Transverse colon (tissue), 4 donors: ENCODE measurements at regions of chr4 and their contacts with region 1.

Region 1: DNA sequence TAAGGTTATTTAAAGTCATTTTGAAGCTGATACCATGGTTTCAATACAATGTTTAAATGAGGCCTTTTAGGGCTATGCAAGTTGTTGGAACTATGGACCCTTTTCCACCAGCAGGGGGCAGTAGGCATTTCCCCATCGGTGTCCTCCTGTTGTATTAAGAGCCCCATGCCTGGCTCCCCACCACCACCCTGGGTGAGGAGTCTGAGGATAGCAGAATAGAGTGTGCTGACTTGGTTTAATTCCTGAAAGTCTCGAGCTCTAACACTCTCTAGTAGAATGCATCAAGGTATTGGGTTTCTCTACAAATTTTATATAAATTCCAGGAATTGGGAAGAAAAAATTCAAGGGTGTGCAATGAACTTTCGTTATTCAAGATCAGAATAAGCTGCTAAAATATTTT is 234.8 kb upstream of the JADE1 start:
- DNase-seq: peak; percentile 84
- H3K4me3 ChIP-seq: no peak overlapping the region
- H3K27ac ChIP-seq: no peak overlapping the region
- H3K4me1 ChIP-seq: peaks cover 0 to 29% (median 10%) of the 10 kb centered on the region in 4 donors
- H3K27me3 ChIP-seq: no peaks in the 10 kb centered on the region
- CTCF ChIP-seq: peak; percentile 57 to 65 (median 64)
- EP300 ChIP-seq: no peak
- POLR2A ChIP-seq: no peak

Region 2: DNA sequence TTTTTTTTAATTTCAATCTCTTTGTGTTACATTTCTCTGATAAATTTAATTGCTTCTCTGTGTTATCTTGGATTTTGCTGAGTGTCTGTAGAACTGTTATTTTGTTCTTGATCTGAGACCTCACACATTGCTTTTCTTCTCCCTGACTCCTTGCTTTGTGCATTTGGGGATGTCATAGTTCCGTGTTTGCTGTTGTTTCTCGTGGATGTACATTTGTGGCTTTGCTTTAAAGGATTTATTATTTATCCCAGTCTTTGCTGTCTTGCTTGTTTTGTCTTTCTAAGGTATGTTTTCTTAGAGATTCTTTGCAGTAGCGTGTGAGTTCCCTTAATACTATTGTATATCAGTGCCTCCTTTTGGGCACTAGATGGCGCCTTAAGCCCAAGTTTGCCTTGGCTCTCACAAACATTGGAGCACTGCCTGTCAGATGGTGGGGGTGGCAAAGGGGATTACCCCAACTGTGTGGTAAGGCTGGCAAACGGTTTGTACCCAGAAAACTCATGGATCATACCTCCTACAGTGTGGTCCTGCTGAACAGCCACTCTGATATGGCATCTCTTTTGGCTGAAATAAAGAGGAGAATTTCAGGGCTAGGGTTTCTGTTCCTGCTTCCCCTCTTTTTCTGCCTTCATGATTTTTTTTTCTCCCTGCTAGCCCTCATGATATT is 383.5 kb before region 1 on chr4:
- in situ Hi-C with region 1: loop called in 2 of 4 experiments (anchors 25 kb)
- intact Hi-C with region 1: no loop called
- DNase-seq: peak; percentile 60
- H3K4me3 ChIP-seq: no peak overlapping the region
- H3K27ac ChIP-seq: no peak overlapping the region
- H3K4me1 ChIP-seq: peaks cover 0 to 8% (median 0%) of the 10 kb centered on the region in 4 donors
- H3K27me3 ChIP-seq: no peaks in the 10 kb centered on the region
- CTCF ChIP-seq: peak; percentile 80 to 87 (median 85)
- EP300 ChIP-seq: no peak
- POLR2A ChIP-seq: no peak

Region 3: DNA sequence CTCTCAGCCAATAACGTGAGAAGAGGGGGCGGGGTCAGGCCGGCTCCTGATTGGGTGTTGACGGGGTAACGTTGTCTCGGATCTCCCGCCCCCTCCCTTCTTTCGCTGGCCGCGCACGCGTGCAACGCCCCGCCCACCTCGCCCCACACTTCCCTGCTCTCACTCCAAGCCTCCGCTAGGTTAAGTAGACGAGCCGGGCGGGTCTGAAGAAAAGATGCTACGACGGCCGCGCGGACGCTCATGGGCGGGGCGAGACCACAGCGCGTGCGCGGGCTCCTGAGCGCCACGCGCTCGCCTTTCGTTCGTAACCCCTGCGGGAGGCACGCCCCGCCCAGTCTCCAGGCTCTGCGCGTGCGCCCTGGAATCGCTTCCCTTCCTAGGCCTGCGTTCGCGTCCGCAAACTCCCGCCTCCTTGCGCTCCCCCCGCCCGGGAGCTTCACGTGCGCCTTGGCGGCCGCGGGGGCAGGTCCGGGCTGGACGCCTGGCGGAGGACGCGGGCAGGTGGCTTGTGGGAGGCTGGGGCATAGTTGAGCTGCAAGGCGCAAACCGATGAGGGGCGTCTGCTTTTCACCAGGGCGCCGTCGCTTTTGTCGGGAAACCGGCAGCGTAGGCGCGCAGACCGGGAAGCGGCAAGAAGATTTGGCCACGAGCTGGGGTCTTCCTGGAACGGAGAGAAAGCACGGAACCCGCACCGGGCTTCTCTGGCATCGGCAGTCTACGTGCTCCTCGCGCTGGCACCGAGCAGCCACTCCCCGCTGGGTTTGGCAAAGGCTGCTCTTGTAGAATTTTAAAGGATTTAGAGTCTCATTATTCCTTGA is 286.6 kb before region 1 on chr4:
- in situ Hi-C with region 1: loop called in 2 of 4 experiments (anchors 25 kb)
- intact Hi-C with region 1: no loop called
- DNase-seq: peak; percentile 100
- H3K4me3 ChIP-seq: peak overlapping the region; percentile 10 to 98 (median 78)
- H3K27ac ChIP-seq: peak overlapping the region; percentile 90 to 96 (median 92)
- H3K4me1 ChIP-seq: peaks cover 6 to 41% (median 17%) of the 10 kb centered on the region in 4 donors
- H3K27me3 ChIP-seq: no peaks in the 10 kb centered on the region
- CTCF ChIP-seq: peak; percentile 32 to 74 (median 39)
- EP300 ChIP-seq: no peak
- POLR2A ChIP-seq: peak; percentile 79

Region 4: GRCh38 chr4:128454281-128455075 is 120.2 kb before region 1 on chr4:
- in situ Hi-C with region 1: loop called in 1 of 4 experiments (anchors 25 kb)
- intact Hi-C with region 1: loop called (anchors 10 kb)
- DNase-seq: peak; percentile 73
- H3K4me3 ChIP-seq: no peak overlapping the region
- H3K27ac ChIP-seq: no peak overlapping the region
- H3K4me1 ChIP-seq: peaks cover 0 to 10% (median 0%) of the 10 kb centered on the region in 4 donors
- H3K27me3 ChIP-seq: no peaks in the 10 kb centered on the region
- CTCF ChIP-seq: peak; percentile 66 to 72 (median 69)
- EP300 ChIP-seq: no peak
- POLR2A ChIP-seq: no peak

Region 5: GRCh38 chr4:129093191-129093920 is 518.6 kb after region 1 on chr4 and contains the start of gene SCLT1:
- in situ Hi-C with region 1: loop called in 1 of 4 experiments (anchors 25 kb)
- intact Hi-C with region 1: loop called (anchors 10 kb)
- DNase-seq: peak; percentile 100
- H3K4me3 ChIP-seq: peak within 1 kb of the TSS; percentile 64 to 78 (median 68)
- H3K27ac ChIP-seq: peak within 1 kb of the TSS; percentile 96 to 97 (median 96)
- H3K4me1 ChIP-seq: peaks cover 7 to 49% (median 14%) of the 10 kb centered on the region in 4 donors
- H3K27me3 ChIP-seq: no peaks in the 10 kb centered on the region
- CTCF ChIP-seq: no peak
- EP300 ChIP-seq: no peak
- POLR2A ChIP-seq: peak; percentile 95
- total RNA-seq, gene SCLT1: 10.1 to 29.9 (median 14.3) TPM